Motor neuron (in vitro differentiated cells): ENCODE measurements at regions of chr12 and their contacts with region 1.

Region 1: GRCh38 chr12:63779498-63780481 is at the start of gene RXYLT1:
- ATAC-seq: peak; percentile 93 to 95 (median 94)
- H3K4me3 ChIP-seq: peak within 1 kb of the TSS; percentile 57 to 82 (median 68)
- H3K27ac ChIP-seq: peak within 1 kb of the TSS; percentile 84 to 95
- H3K4me1 ChIP-seq: peaks cover 0 to 6% of the 10 kb centered on the region in 2 donors
- total RNA-seq, gene RXYLT1: 11.0 to 32.4 (median 17.4) TPM

Region 2: GRCh38 chr12:63103494-63104131 is 676.2 kb before region 1 on chr12:
- in situ Hi-C with region 1: loop called in 1 of 9 experiments (anchors 25 kb)
- ATAC-seq: no peak
- H3K4me3 ChIP-seq: no peak overlapping the region
- H3K27ac ChIP-seq: no peak overlapping the region
- H3K4me1 ChIP-seq: no peaks in the 10 kb centered on the region